Caco-2 (cell line): ENCODE measurements at regions of chr17 and their contacts with region 1.

Region 1: GRCh38 chr17:50560185-50560824 is at the start of gene CACNA1G:
- DNase-seq: peak; percentile 97 to 100
- H3K4me3 ChIP-seq: peak within 1 kb of the TSS; percentile 41
- H3K4me3 Mint-ChIP-seq: peak within 1 kb of the TSS; percentile 87
- H3K27ac Mint-ChIP-seq: peak within 1 kb of the TSS; percentile 52
- H3K4me1 ChIP-seq: peaks cover 16% of the 10 kb centered on the region
- H3K4me1 Mint-ChIP-seq: peaks cover 7% of the 10 kb centered on the region
- H3K27me3 ChIP-seq: peaks cover 12% of the 10 kb centered on the region
- H3K27me3 Mint-ChIP-seq: peaks cover 16% of the 10 kb centered on the region
- CTCF ChIP-seq: no peak
- total RNA-seq, gene CACNA1G: 1.4 and 1.6 TPM in 2 replicates

Region 2: GRCh38 chr17:50272711-50273653 is 287.3 kb before region 1 on chr17:
- CTCF ChIA-PET with region 1: no interaction called
- POLR2A ChIA-PET with region 1: no interaction called
- intact Hi-C with region 1: no loop called
- DNase-seq: peak; percentile 73 to 93
- H3K4me3 ChIP-seq: peak overlapping the region; percentile 31
- H3K4me3 Mint-ChIP-seq: peak overlapping the region; percentile 77
- H3K27ac Mint-ChIP-seq: peak overlapping the region; percentile 3
- H3K4me1 ChIP-seq: peaks cover 43% of the 10 kb centered on the region
- H3K4me1 Mint-ChIP-seq: peaks cover 28% of the 10 kb centered on the region
- H3K27me3 ChIP-seq: no peaks in the 10 kb centered on the region
- H3K27me3 Mint-ChIP-seq: no peaks in the 10 kb centered on the region
- CTCF ChIP-seq: peak; percentile 75 to 99

Region 3: DNA sequence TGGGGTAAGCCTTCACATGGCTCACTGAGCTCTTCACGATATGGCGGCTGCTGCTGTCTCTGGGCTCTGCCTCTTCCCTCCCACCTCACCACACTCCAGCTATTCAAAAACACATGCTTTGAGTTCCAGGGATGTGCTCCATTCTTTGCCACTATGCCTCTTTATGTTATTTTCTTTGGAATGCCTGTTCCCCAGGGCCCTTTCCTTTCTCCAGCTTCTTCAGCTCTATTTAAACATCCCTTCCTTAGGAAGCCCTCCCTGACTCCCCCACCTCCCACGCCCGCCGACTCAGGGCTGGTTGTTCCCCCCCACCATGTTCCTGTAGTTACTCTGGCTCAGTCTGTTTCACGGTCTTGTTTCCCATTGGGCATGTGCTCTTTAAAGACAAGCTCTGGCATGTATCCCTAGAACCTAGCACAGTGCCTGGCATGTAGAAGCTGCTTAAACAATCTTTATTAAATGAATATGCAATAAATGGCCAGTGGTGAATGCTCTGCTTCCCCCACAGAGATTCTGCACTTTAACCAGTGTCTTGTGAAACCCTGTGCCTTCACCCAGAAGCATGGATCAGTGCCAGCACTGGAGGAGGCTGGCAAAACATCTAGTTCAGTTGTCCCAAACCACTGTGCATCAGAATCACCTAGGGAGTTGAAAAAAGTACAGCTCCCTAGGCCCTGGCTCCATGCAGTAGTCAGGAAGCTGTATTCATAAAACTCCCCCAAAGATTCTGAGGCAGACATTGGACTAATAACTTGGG is 45.2 kb before region 1 on chr17:
- CTCF ChIA-PET with region 1: no interaction called
- POLR2A ChIA-PET with region 1: no interaction called
- intact Hi-C with region 1: no loop called
- DNase-seq: no peak
- H3K4me3 ChIP-seq: no peak overlapping the region
- H3K4me3 Mint-ChIP-seq: no peak overlapping the region
- H3K27ac Mint-ChIP-seq: no peak overlapping the region
- H3K4me1 ChIP-seq: peaks cover 3% of the 10 kb centered on the region; the same call in 1 of the 2 replicates
- H3K4me1 Mint-ChIP-seq: peaks cover 12% of the 10 kb centered on the region
- H3K27me3 ChIP-seq: no peaks in the 10 kb centered on the region
- H3K27me3 Mint-ChIP-seq: no peaks in the 10 kb centered on the region
- CTCF ChIP-seq: no peak

Region 4: GRCh38 chr17:50575581-50576210 is 15.4 kb after region 1 on chr17:
- CTCF ChIA-PET with region 1: interaction called, 15 read pairs
- POLR2A ChIA-PET with region 1: no interaction called
- intact Hi-C with region 1: no loop called
- DNase-seq: peak in 1 of 2 experiments; percentile 68
- H3K4me3 ChIP-seq: no peak overlapping the region
- H3K4me3 Mint-ChIP-seq: no peak overlapping the region
- H3K27ac Mint-ChIP-seq: no peak overlapping the region
- H3K4me1 ChIP-seq: no peaks in the 10 kb centered on the region
- H3K4me1 Mint-ChIP-seq: no peaks in the 10 kb centered on the region
- H3K27me3 ChIP-seq: no peaks in the 10 kb centered on the region
- H3K27me3 Mint-ChIP-seq: peaks cover 2% of the 10 kb centered on the region
- CTCF ChIP-seq: peak; percentile 36 to 39

Region 5: DNA sequence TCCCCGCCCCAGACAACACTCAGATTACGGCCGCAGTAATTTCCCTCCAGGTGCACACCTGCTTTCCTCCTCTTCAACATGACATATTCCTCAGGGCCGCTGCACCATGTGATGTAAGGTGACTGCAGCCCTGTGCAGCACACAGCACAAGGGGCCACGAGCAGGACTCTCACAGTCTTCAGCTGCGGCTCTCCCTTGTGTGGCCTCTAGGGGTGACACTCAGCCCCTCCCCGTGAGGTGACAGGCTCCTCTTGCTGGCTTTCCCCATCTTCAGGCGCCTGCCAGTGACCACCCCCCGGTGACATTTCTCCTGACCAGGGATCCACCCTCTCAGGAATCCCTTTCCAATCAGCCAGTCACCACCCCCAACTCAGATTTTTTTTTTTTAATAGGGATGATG is 43.0 kb after region 1 on chr17:
- CTCF ChIA-PET with region 1: interaction called, 5 read pairs
- POLR2A ChIA-PET with region 1: no interaction called
- intact Hi-C with region 1: loop called (anchors 2 kb)
- DNase-seq: peak; percentile 66 to 75
- H3K4me3 ChIP-seq: no peak overlapping the region
- H3K4me3 Mint-ChIP-seq: no peak overlapping the region
- H3K27ac Mint-ChIP-seq: no peak overlapping the region
- H3K4me1 ChIP-seq: no peaks in the 10 kb centered on the region
- H3K4me1 Mint-ChIP-seq: peaks cover 7% of the 10 kb centered on the region
- H3K27me3 ChIP-seq: no peaks in the 10 kb centered on the region
- H3K27me3 Mint-ChIP-seq: peaks cover 6% of the 10 kb centered on the region
- CTCF ChIP-seq: peak; percentile 61 to 66